B cell (primary cell): ENCODE measurements at regions of chr3 and their contacts with region 1.

Region 1: DNA sequence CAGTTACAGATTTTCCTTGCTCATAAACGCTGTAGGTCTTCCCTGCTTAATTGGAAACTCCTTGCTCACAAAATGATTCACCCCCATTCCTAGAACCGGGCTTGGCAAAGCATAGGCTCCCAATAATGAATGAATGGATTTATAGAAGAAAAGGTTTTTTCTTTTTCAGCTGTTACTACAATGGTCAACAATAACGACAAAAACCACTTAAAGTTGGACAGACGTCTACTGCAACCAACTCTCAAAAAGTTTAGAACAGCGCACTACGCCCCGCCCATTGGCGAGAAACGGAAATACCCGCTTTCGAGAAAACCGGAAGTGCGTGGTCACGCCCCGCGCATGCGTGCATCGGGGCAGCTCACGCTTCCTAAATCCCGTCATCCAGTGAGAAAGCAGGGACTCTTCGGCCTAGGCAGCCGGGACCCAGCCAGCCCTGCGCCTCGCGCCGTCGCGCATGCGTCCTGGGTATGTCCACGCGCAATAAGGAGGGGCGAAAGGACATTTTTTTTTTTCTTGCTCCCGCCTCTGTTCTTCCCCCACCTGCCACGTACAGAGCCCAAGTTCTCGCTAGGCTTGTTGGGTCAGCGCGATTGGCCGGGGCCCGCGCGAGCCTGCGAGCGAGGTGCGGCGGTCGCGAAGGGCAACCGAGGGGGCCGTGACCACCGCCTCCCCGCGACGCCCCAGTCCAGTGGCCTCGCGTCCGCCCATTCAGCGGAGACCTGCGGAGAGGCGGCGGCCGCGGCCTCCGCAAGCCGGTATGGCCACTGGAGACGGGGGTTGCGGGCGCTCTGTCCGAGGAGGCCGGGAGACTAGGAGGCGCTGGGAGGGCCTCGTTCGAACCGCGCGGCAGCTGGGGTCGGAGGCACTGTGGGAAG is at the start of gene TFG:
- DNase-seq: peak; percentile 99
- ATAC-seq: peak; percentile 94
- H3K4me3 ChIP-seq: peak within 1 kb of the TSS; percentile 47 to 85 (median 78)
- H3K4me3 Mint-ChIP-seq: peak within 1 kb of the TSS; percentile 92
- H3K27ac ChIP-seq: peak within 1 kb of the TSS; percentile 76 to 90
- H3K27ac Mint-ChIP-seq: peak within 1 kb of the TSS; percentile 97
- H3K4me1 ChIP-seq: peaks cover 19 to 21% of the 10 kb centered on the region in 2 donors
- H3K4me1 Mint-ChIP-seq: peaks cover 36% of the 10 kb centered on the region
- H3K27me3 ChIP-seq: peaks cover 0 to 21% (median 8%) of the 10 kb centered on the region in 4 experiments
- H3K27me3 Mint-ChIP-seq: peaks cover 22% of the 10 kb centered on the region
- CTCF ChIP-seq: no peak
- total RNA-seq, gene TFG: 44.0 and 51.6 TPM in 2 replicates

Region 2: DNA sequence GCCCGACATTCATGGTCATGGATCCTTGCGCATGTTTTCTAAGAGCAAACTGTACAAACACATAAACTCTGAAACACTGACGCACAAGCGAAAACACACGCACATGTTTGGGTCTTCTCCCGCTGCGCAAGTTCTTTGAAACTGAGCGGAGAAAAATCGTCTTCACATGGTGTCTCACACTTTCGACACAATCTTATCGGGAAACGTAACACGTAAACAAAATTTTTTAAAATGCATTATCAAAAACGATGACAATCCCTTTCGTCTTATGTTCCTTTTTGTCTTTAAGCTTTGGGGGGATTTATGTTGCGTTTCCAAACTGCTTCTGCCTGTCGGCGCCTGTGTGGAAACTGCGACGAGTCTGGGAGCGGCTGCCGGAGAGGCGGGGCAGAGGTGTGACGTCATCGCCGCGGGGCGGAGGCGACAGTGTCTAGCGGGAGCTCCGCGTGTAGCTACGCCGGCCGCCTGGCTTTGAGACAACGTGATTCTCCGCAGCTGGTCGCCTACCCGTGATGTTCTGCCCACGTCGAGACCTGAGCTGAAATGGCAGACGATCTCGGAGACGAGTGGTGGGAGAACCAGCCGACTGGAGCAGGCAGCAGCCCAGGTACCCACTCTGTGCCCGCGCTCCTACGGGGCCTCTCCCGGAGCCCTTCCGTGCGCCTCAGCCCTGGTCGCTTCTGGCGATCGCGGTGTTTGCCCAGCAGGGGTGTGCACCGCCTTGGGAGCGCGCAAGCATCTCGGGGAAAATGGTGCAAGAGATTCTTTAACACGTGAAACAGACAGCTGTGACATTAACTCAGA is 891.6 kb before region 1 on chr3 and contains the start of gene CMSS1:
- CTCF ChIA-PET with region 1: no interaction called
- POLR2A ChIA-PET with region 1: no interaction called
- intact Hi-C with region 1: loop called (anchors 2 kb)
- DNase-seq: peak; percentile 98
- ATAC-seq: peak; percentile 91
- H3K4me3 ChIP-seq: peak within 1 kb of the TSS; percentile 71 to 99 (median 89)
- H3K4me3 Mint-ChIP-seq: peak within 1 kb of the TSS; percentile 99
- H3K27ac ChIP-seq: peak within 1 kb of the TSS; percentile 85 to 91
- H3K27ac Mint-ChIP-seq: peak within 1 kb of the TSS; percentile 100
- H3K4me1 ChIP-seq: peaks cover 16 to 17% of the 10 kb centered on the region in 2 donors
- H3K4me1 Mint-ChIP-seq: peaks cover 39% of the 10 kb centered on the region
- H3K27me3 ChIP-seq: no peaks in the 10 kb centered on the region
- H3K27me3 Mint-ChIP-seq: no peaks in the 10 kb centered on the region
- CTCF ChIP-seq: no peak
- total RNA-seq, gene CMSS1: 22.0 and 22.8 TPM in 2 replicates

Region 3: DNA sequence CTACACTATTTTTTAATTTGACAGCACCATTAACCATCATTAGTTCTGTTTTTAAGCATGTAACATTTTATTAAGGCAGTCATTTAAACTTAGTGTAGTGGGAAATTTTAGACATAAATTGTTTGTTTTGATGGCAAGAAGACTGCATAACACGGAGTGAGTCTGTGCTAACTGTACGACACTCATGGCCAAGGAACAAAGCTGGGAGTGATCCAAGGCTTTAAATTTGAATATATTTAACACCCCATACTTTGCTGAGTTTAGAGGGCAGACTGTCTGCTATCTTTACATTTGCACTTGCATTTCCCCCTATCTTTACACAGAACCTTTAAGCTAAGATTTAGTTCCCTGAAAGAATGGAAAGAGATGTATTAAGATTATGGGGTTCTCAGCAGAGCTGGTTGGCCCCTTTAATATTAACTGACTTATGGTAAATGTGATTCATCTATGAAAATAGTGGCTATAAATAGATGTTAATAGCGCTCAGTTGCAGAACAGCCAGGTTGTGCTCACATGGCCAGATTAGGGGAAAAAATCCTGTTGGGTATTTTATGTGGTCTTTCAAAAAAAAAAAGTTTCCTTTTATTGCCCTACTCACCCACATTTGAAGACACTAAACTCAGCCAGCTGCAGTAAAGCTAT is 770.8 kb before region 1 on chr3:
- CTCF ChIA-PET with region 1: no interaction called
- POLR2A ChIA-PET with region 1: no interaction called
- intact Hi-C with region 1: no loop called
- DNase-seq: no peak
- ATAC-seq: no peak
- H3K4me3 ChIP-seq: peak overlapping the region in 1 of 5 experiments; percentile 28
- H3K4me3 Mint-ChIP-seq: peak overlapping the region; percentile 72
- H3K27ac ChIP-seq: no peak overlapping the region
- H3K27ac Mint-ChIP-seq: peak overlapping the region; percentile 42
- H3K4me1 ChIP-seq: peaks cover 12 to 14% of the 10 kb centered on the region in 2 donors
- H3K4me1 Mint-ChIP-seq: peaks cover 26% of the 10 kb centered on the region
- H3K27me3 ChIP-seq: no peaks in the 10 kb centered on the region
- H3K27me3 Mint-ChIP-seq: no peaks in the 10 kb centered on the region
- CTCF ChIP-seq: no peak

Region 4: GRCh38 chr3:100603469-100603868 is 105.7 kb before region 1 on chr3:
- CTCF ChIA-PET with region 1: no interaction called
- POLR2A ChIA-PET with region 1: no interaction called
- intact Hi-C with region 1: loop called (anchors 1 kb)
- DNase-seq: no peak
- ATAC-seq: peak; percentile 40
- H3K4me3 ChIP-seq: peak overlapping the region; percentile 31 to 59 (median 46)
- H3K4me3 Mint-ChIP-seq: peak overlapping the region; percentile 87
- H3K27ac ChIP-seq: peak overlapping the region; percentile 72 to 80
- H3K27ac Mint-ChIP-seq: peak overlapping the region; percentile 93
- H3K4me1 ChIP-seq: peaks cover 17 to 26% of the 10 kb centered on the region in 2 donors
- H3K4me1 Mint-ChIP-seq: peaks cover 27% of the 10 kb centered on the region
- H3K27me3 ChIP-seq: peaks cover 0 to 9% (median 0%) of the 10 kb centered on the region in 4 experiments
- H3K27me3 Mint-ChIP-seq: peaks cover 8% of the 10 kb centered on the region
- CTCF ChIP-seq: peak; percentile 25

Region 5: DNA sequence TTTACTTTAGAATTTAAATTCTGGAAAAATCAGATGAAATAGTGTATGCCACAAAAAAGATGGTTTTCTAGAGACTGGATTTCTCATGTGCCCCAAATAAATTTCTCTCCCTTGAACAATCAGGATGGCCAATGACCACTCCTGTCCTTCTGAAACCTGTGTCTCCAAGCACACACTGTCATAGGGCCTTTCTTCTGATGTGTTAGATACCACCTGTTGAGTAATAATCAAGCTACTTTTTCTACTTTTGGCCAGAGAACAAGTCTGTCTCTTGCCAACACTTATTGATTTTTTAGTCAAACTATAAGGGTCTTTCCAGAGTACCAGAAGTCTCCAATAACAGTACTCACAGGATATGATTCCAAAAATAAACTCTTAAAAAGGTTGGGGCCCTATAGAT is 16.0 kb before region 1 on chr3:
- CTCF ChIA-PET with region 1: no interaction called
- POLR2A ChIA-PET with region 1: no interaction called
- intact Hi-C with region 1: no loop called
- DNase-seq: no peak
- ATAC-seq: no peak
- H3K4me3 ChIP-seq: no peak overlapping the region
- H3K4me3 Mint-ChIP-seq: no peak overlapping the region
- H3K27ac ChIP-seq: no peak overlapping the region
- H3K27ac Mint-ChIP-seq: no peak overlapping the region
- H3K4me1 ChIP-seq: no peaks in the 10 kb centered on the region
- H3K4me1 Mint-ChIP-seq: no peaks in the 10 kb centered on the region
- H3K27me3 ChIP-seq: peaks cover 0 to 33% (median 10%) of the 10 kb centered on the region in 4 experiments
- H3K27me3 Mint-ChIP-seq: peaks cover 47% of the 10 kb centered on the region
- CTCF ChIP-seq: no peak

Region 6: DNA sequence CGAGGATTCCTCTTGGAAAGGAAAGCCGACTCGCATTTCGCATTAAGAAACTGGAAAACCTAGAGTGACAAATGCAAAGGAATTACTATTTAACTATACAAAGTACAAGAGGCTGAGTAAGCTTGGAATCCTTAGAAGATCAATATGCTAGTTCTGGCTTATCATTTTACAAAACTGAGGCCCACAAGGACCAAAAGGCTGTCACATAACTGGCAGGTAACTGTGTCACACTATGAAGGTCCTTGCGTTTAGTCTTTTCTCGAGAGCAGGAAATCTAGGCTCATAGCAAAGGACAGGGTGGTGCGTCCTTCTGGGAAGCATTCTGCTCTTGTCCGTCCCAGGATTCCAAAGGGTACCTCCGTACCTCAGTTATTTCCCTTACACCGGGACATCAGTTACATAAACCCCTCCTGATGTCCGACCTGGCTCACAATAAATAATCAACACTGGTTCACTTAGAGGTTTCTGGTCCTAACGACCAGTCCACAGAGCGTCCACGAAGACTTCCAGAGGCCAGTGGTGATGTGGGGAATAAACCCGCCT is 976.7 kb after region 1 on chr3:
- CTCF ChIA-PET with region 1: no interaction called
- POLR2A ChIA-PET with region 1: no interaction called
- intact Hi-C with region 1: loop called (anchors 2 kb)
- DNase-seq: no peak
- ATAC-seq: peak; percentile 6
- H3K4me3 ChIP-seq: peak overlapping the region; percentile 64 to 98 (median 84)
- H3K4me3 Mint-ChIP-seq: peak overlapping the region; percentile 100
- H3K27ac ChIP-seq: peak overlapping the region; percentile 89 to 90
- H3K27ac Mint-ChIP-seq: peak overlapping the region; percentile 99
- H3K4me1 ChIP-seq: peaks cover 22 to 32% of the 10 kb centered on the region in 2 donors
- H3K4me1 Mint-ChIP-seq: peaks cover 32% of the 10 kb centered on the region
- H3K27me3 ChIP-seq: no peaks in the 10 kb centered on the region
- H3K27me3 Mint-ChIP-seq: no peaks in the 10 kb centered on the region
- CTCF ChIP-seq: peak; percentile 12